ENCODE measurements at regions of chr1 and their contacts with region 1.

Region 1: DNA sequence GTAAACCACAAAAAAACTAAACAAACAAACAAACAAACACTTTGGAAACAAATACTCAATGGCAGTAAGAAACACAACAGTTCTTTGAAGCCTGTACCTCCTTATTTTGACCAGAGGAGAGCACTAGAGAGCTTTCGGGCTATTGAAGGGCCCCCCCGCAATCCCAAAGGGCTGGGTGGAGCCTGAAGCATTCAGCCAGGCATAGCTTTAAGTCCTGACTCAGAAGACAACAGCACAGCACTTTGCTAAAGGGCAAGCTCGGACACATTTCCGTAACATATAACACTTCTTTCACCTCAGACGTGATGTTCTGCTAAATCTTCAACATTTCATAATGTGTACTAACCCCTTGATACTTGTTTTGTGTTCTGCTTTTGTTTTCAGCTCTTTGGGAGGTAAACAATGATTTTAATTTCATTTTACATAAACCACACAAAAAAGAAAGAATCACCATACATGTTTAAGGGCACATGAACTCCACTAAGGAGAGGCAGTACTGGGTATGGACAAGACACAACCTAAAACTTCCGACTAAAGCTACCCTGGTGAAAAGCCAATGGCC is 9.7 kb upstream of the SHCBP1L start:
- DNase-seq: peak; percentile 71
- H3K4me3 ChIP-seq: peak overlapping the region; percentile 34
- CTCF ChIP-seq: peak; percentile 77

Region 2: DNA sequence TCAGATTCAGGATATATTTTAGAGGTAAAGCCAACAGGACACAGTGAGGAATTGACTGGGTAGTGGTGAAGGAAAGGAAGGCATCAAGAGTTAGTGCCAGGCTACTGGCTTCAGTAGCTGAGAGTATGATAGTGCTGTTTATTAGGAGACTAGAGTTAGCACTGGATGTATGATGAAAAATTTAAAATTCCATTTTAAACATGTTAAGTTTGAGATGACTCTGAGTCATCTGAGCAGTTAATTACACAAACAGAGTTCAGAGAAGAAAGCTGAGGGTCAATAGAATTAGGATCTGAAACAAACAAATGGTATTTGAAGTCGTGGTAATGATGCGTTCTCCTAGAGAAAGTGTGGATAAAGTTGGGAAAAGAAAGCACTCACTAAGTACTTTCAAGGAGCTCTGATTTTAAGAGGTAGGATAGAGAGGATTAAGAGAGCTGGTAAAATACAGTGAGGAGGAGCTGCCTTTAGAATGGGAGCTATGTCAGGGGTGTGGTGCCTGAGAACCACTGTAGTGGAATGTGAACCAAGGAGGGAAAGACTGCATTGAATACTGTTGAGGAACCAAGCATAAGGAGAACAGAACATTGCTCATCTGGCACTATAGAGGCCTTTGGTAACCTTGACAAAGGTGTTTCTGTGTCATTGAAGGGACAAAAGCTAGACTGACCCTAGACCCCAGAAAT is 12.0 kb after region 1 on chr1:
- CTCF ChIA-PET with region 1: interaction called, 16 read pairs
- POLR2A ChIA-PET with region 1: no interaction called
- DNase-seq: no peak
- H3K4me3 ChIP-seq: no peak overlapping the region
- CTCF ChIP-seq: no peak

Region 3: GRCh38 chr1:183139281-183139942 is 176.8 kb after region 1 on chr1:
- CTCF ChIA-PET with region 1: interaction called, 10 read pairs
- POLR2A ChIA-PET with region 1: no interaction called
- DNase-seq: no peak
- H3K4me3 ChIP-seq: no peak overlapping the region
- CTCF ChIP-seq: no peak

Region 4: GRCh38 chr1:183212870-183213269 is 250.2 kb after region 1 on chr1:
- CTCF ChIA-PET with region 1: no interaction called
- POLR2A ChIA-PET with region 1: no interaction called
- DNase-seq: no peak
- H3K4me3 ChIP-seq: no peak overlapping the region
- CTCF ChIP-seq: no peak

Region 5: DNA sequence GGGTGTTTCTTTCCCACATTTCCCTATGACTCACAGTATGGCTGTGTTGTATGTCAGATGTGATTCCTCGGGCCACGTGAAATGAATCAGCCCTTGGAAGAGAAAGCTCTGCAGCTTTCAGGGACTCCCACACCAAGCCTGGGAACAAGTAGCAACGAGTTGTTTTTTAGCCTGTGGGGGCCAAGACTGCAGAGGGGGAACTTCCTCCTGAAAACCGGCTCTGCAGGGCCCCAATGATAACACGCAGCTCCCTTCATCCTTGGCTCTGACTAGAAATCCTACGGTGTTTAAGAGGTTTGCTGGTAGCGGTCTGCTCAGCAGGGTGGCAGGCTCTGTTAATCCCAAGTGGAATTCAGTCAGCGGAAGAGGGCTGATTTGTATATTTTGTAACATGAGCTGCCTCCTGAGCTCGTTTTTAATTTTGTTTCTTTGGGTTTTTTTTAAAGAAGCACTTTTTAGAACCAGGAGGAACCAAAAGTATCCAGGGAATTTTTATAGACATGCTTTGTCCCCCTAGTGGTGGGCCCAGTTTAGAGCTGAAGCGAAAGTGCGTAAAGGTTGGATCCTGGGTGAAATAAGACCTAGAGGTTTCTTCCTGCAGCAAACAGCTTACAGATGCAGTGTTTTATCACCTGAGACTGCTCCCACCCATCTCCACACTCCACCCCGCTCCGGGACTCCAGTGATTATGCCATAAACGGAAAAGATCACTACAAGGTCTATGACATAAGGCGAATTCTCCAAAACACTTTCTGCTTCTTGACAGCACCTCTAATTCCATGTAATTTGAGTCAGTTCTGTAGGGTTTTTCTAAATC is 272.2 kb after region 1 on chr1:
- CTCF ChIA-PET with region 1: interaction called, 37 read pairs
- POLR2A ChIA-PET with region 1: interaction called, 3 read pairs
- DNase-seq: peak; percentile 93
- H3K4me3 ChIP-seq: peak overlapping the region; percentile 56
- CTCF ChIP-seq: peak; percentile 64

Region 6: GRCh38 chr1:183318433-183318832 is 355.8 kb after region 1 on chr1:
- CTCF ChIA-PET with region 1: interaction called, 43 read pairs
- POLR2A ChIA-PET with region 1: no interaction called
- DNase-seq: peak; percentile 83
- H3K4me3 ChIP-seq: no peak overlapping the region
- CTCF ChIP-seq: peak; percentile 78

Measured in AG04449 (cell line).